PC-9 (cell line): ENCODE measurements at regions of chr14 and their contacts with region 1.

Region 1: GRCh38 chr14:32657081-32657480 is 281.6 kb upstream of the NPAS3 start:
- DNase-seq: no peak
- H3K4me3 ChIP-seq: no peak overlapping the region
- H3K27ac ChIP-seq: no peak overlapping the region
- H3K4me1 ChIP-seq: no peaks in the 10 kb centered on the region
- H3K27me3 ChIP-seq: no peaks in the 10 kb centered on the region
- CTCF ChIP-seq: no peak

Region 2: GRCh38 chr14:33774723-33775470 is 1117.8 kb after region 1 on chr14:
- CTCF ChIA-PET with region 1: no interaction called
- POLR2A ChIA-PET with region 1: interaction called, 22 read pairs
- intact Hi-C with region 1: no loop called
- DNase-seq: no peak
- H3K4me3 ChIP-seq: no peak overlapping the region
- H3K27ac ChIP-seq: no peak overlapping the region
- H3K4me1 ChIP-seq: no peaks in the 10 kb centered on the region
- H3K27me3 ChIP-seq: no peaks in the 10 kb centered on the region
- CTCF ChIP-seq: no peak